Left ventricle myocardium superior (tissue), 1 donor: ENCODE measurements at regions of chr6 and their contacts with region 1.

Region 1: GRCh38 chr6:152124429-152125074 is 317.1 kb downstream of the ESR1 start:
- DNase-seq: no peak
- ATAC-seq: peak; percentile 46

Region 2: GRCh38 chr6:151681433-151682059 is 443.0 kb before region 1 on chr6:
- intact Hi-C with region 1: loop called (anchors 10 kb)
- DNase-seq: peak; percentile 42
- ATAC-seq: peak; percentile 64

Region 3: GRCh38 chr6:151765444-151765886 is 359.1 kb before region 1 on chr6:
- intact Hi-C with region 1: loop called (anchors 5 kb)
- DNase-seq: no peak
- ATAC-seq: peak; percentile 62

Region 4: GRCh38 chr6:152206072-152206818 is 81.7 kb after region 1 on chr6:
- intact Hi-C with region 1: no loop called
- DNase-seq: peak; percentile 64
- ATAC-seq: peak; percentile 23